Cardiac septum (tissue), 1 donor: ENCODE measurements at regions of chr11 and their contacts with region 1.

Region 1: GRCh38 chr11:74929431-74930363 is 19.2 kb downstream of the XRRA1 start:
- DNase-seq: peak; percentile 76

Region 2: DNA sequence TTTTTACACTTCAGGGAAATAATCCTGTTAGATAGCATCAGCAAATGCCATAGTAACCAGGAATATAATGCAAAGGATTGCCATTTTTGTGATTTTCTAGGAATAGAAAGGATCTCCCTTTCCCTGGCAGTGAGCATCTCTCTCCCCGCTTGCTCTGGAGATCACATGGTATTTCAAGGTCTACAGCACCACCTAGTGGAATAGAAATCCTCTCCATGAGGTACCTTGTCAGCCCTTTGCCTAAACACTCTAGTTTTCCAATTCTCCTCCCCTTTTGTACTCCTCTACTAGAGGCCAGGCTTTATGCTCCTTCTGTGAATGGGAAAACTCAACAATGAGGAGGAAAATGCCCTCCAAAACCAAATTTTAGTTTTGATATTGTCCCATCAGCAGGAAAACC is 59.2 kb before region 1 on chr11:
- intact Hi-C with region 1: no loop called
- DNase-seq: no peak

Region 3: GRCh38 chr11:75014129-75014528 is 84.4 kb after region 1 on chr11:
- intact Hi-C with region 1: no loop called
- DNase-seq: no peak

Region 4: GRCh38 chr11:75031771-75032549 is 102.3 kb after region 1 on chr11:
- intact Hi-C with region 1: loop called (anchors 2 kb)
- DNase-seq: no peak

Region 5: DNA sequence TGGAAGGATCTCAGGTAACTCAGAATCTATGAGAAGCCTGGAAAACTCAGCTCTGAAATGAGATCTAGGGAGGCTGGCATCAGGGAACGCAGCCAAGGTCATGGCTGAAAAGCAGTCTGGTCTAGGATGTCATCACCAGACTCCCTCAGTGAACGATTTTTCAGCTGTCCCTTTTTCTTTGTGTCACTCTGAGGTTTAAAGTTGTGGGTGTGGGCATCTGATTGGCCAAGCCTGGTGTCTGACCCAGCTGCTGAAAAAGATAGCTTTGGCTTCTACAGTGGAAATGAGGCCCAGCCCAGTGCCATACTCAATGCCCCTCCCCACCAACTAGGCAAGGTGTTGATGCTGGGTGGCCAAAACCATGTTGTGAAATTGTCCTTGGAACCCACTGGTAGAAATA is 484.2 kb after region 1 on chr11:
- intact Hi-C with region 1: no loop called
- DNase-seq: peak; percentile 7